Psoas muscle (tissue), 8 donors: ENCODE measurements at regions of chr21 and their contacts with region 1.

Region 1: DNA sequence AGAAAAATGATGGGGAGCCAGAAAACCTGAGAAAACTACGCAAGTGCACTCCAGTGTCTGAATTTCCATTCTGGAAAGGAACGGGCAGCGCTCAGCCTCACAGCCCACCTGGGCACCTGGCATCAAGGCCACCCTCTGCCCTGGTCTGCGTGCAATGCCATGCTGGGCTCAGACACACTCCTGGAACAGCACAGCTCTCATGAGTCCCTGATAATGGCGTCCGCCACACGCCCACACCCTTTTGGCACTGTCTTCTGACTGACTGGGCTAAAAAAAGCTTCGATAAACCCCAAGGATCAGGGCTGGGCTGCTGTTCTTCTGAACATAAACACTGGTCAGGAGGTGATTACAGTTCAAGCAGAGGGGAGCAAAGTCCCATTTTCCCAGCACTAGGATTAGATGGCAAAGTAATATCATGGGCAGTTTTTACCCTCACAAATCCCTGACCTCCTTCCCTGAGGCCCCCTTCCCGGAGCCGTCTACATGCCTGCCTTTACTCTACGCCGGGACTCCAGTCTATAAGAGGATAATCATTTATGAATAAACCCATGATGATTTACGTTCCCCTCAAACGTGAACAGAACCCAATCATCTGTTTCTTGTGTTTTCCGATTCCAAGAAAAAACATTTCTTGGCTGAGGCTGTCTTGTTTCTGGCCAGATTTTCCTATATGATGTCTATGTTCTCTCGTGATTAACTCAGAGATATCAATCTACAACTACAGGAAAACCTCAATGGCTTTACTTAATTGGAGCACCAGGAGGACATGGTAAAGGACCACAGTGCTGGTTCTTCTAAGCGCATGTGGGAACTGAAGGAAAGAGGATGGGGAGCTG is 22.6 kb downstream of the RCAN1 start:
- DNase-seq: peak in 1 of 2 donors; percentile 27
- ATAC-seq: peak; percentile 47 to 90 (median 82)
- H3K4me3 ChIP-seq: peak overlapping the region; percentile 39
- H3K27ac ChIP-seq: peak overlapping the region; percentile 4
- H3K4me1 ChIP-seq: peaks cover 25% of the 10 kb centered on the region
- H3K27me3 ChIP-seq: no peaks in the 10 kb centered on the region
- CTCF ChIP-seq: no peak

Region 2: GRCh38 chr21:34642211-34643075 is 50.1 kb after region 1 on chr21:
- intact Hi-C with region 1: loop called in 1 of 2 experiments (anchors 10 kb)
- DNase-seq: no peak
- ATAC-seq: no peak
- H3K4me3 ChIP-seq: no peak overlapping the region
- H3K27ac ChIP-seq: no peak overlapping the region
- H3K4me1 ChIP-seq: no peaks in the 10 kb centered on the region
- H3K27me3 ChIP-seq: no peaks in the 10 kb centered on the region
- CTCF ChIP-seq: no peak